Sigmoid colon (tissue), 7 donors: ENCODE measurements at regions of chr22 and their contacts with region 1.

Region 1: DNA sequence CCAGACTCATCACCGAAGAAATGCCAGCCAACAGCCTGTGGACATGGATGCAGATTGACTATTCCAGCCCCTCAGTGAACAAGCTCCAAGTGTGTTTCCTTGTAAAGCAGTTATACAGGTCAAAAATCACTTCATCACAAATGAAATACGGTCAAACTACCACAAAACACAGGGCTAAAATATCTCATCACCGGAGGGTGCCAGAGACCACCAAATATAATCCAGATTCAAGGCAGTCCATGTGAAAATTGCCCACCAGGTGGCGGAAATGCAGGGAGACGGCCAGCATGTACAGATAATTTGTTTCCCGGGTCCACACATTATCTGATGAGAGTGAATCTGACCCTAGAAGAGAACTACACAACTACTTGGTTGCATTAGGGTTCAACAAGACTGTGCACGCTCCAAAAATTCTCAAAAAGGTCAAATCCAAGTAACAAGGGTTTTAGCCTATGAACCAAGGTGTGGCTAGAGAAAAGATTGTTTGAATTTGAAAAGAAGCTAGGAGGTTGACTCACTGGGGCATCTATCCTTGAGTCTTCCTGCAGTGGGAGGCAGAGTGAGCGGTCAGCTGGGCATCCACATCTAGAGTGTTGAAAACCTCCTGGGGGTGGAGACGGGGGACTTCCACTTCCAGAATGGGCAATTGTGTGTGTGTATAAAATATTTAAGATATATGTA is 71.7 kb downstream of the IGLL5 start:
- DNase-seq: peak; percentile 83
- H3K4me3 ChIP-seq: no peak overlapping the region
- H3K27ac ChIP-seq: no peak overlapping the region
- H3K4me1 ChIP-seq: no peaks in the 10 kb centered on the region
- H3K27me3 ChIP-seq: peaks cover 0 to 5% (median 0%) of the 10 kb centered on the region in 3 donors
- CTCF ChIP-seq: peak; percentile 84 to 97 (median 88)
- EP300 ChIP-seq: no peak
- POLR2A ChIP-seq: no peak

Region 2: DNA sequence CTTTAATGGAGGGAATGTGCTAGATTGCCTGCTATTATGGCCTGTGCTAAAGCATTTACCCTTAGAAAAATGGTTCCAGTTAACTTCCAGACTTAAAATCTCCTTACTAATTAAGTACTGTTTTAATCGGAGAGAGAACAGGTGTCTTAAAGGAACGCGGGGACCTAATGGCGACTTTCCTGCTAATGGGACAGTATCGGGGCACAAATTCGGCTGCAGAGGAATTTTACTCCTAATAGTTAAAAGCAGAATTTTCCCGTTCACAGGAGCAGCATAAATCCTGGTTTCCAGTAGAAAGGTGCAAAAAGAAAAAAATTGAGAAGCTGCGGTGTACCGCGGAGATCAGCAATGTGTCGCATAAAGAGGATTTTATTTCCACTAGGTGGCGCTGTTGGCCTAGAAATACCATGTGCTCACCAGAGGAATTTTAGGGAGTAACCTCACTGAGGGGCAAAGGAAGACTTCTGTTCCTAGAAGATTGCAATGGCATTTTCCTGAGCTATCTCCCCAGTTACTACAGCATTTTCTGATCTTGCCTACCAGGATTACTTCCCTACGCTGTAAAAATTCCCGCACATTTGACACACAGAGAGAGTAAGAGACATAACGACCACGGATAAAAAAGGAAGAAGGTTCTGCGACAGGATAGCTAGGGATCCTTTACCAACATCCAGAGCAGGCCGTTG is 495.3 kb before region 1 on chr22:
- intact Hi-C with region 1: loop called (anchors 5 kb)
- DNase-seq: no peak
- H3K4me3 ChIP-seq: no peak overlapping the region
- H3K27ac ChIP-seq: no peak overlapping the region
- H3K4me1 ChIP-seq: no peaks in the 10 kb centered on the region
- H3K27me3 ChIP-seq: peaks cover 0 to 54% (median 19%) of the 10 kb centered on the region in 3 donors
- CTCF ChIP-seq: peak; percentile 29 to 53 (median 46)
- EP300 ChIP-seq: no peak
- POLR2A ChIP-seq: no peak

Region 3: GRCh38 chr22:22848364-22848866 is 110.9 kb before region 1 on chr22:
- intact Hi-C with region 1: loop called (anchors 5 kb)
- DNase-seq: no peak
- H3K4me3 ChIP-seq: no peak overlapping the region
- H3K27ac ChIP-seq: no peak overlapping the region
- H3K4me1 ChIP-seq: no peaks in the 10 kb centered on the region
- H3K27me3 ChIP-seq: peaks cover 0 to 18% (median 0%) of the 10 kb centered on the region in 3 donors
- CTCF ChIP-seq: peak; percentile 10 to 67 (median 57)
- EP300 ChIP-seq: no peak
- POLR2A ChIP-seq: no peak

Region 4: DNA sequence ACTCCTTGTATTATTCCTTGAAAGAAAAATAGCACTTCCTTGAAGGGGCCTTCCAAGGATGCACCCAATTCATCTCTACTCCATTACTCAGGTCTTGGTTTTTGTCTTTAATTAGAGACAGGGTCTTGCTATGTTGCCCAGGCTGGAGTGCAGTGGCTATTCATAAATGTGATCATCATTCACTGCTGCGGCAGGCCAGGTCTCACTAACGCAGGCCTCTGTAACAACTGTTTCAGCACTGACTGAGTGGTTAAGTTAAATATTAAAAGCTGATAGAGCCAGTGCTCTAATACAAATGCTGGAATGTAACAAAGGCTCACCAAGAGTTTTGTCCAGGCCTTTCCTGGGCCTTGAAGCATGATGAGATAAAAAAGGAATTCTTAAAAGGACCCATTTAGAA is 49.6 kb after region 1 on chr22:
- intact Hi-C with region 1: no loop called
- DNase-seq: no peak
- H3K4me3 ChIP-seq: no peak overlapping the region
- H3K27ac ChIP-seq: no peak overlapping the region
- H3K4me1 ChIP-seq: no peaks in the 10 kb centered on the region
- H3K27me3 ChIP-seq: no peaks in the 10 kb centered on the region
- CTCF ChIP-seq: no peak
- EP300 ChIP-seq: no peak
- POLR2A ChIP-seq: no peak

Region 5: DNA sequence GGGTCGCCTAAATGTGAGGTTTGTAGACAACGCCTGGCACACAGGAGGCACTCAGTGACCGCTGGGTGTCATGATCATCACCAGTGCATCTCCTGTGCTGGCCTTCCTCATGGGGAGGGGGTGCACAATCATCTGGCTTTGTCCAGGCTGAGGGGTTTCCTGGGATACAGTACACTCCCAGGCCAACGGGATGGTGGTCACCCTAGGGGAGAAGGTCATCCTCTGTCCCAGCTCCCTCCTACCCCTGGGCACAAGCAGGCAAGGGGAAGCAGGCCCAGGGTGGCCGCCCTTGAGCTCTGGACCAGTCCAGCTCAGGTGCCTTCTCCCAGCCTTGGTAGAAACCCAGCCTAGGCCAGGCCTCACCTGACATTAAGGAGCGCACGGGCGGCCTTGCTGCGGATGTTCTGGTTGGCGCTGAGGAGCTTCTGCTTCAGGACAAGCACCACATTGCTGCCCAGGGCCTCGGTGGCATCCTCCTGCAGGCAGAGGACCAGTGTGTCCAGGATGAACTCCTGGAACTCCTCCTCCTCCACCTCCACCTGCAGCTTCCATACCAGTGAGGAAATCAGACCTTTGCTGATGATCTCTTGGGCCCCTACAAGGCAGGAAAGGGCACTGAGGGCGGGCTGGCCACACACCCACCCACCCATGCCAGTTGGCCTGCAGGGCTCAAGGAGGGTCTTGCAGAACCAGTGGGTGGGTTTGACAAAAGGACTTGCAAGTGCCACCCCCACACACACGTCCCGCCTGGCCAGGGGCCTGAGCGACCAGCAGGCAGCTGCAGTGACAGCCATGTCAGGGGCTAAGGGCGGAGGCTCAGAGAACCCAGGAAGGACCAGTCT is 104.5 kb after region 1 on chr22:
- intact Hi-C with region 1: no loop called
- DNase-seq: peak; percentile 59
- H3K4me3 ChIP-seq: no peak overlapping the region
- H3K27ac ChIP-seq: no peak overlapping the region
- H3K4me1 ChIP-seq: no peaks in the 10 kb centered on the region
- H3K27me3 ChIP-seq: no peaks in the 10 kb centered on the region
- CTCF ChIP-seq: no peak
- EP300 ChIP-seq: no peak
- POLR2A ChIP-seq: no peak

Region 6: GRCh38 chr22:23128269-23129108 is 169.2 kb after region 1 on chr22:
- intact Hi-C with region 1: loop called (anchors 1 kb)
- DNase-seq: peak; percentile 78
- H3K4me3 ChIP-seq: no peak overlapping the region
- H3K27ac ChIP-seq: no peak overlapping the region
- H3K4me1 ChIP-seq: peaks cover 0 to 7% (median 5%) of the 10 kb centered on the region in 4 donors
- H3K27me3 ChIP-seq: no peaks in the 10 kb centered on the region
- CTCF ChIP-seq: peak; percentile 66 to 89 (median 72)
- EP300 ChIP-seq: no peak
- POLR2A ChIP-seq: no peak

Region 7: DNA sequence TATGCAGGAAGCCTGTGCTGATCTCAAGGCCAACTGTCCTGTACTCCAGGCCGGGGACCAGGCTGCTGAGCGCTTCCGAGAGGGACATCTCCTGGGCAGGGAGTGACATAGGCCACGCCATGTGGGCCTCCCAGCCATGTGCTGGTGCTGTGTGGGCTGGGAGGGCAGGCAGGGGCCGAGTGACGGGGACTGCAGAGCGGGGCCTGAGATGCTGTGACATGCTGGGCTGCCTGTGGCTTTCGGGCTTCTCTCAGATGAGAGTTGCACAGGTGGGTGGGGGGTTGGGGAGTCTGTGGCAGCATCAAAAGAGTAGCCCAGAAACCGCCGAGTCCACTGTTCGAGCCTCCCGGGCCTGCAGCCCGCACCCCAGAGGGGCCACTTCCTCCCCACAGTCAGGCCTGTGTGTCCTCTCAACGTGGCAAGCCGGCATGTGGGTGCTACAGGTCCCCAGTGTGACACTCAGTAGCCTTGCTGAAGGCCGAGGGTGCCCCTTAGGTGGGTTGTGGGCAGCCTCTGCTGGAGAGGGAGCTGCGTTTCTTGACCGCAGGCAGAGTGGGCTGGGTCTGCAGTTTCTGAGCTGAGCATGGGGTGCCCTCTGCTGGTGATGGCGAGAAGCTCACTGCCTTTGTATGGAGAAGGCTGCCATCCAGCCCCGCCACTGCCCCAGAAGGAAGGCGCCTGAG is 322.3 kb after region 1 on chr22:
- intact Hi-C with region 1: loop called (anchors 10 kb)
- DNase-seq: peak; percentile 93
- H3K4me3 ChIP-seq: peak overlapping the region in 2 of 4 donors; percentile 23 to 24
- H3K27ac ChIP-seq: peak overlapping the region; percentile 81 to 91 (median 86)
- H3K4me1 ChIP-seq: peaks cover 0 to 69% (median 57%) of the 10 kb centered on the region in 4 donors
- H3K27me3 ChIP-seq: no peaks in the 10 kb centered on the region
- CTCF ChIP-seq: peak; percentile 97 to 98 (median 97)
- EP300 ChIP-seq: no peak
- POLR2A ChIP-seq: no peak

Region 8: DNA sequence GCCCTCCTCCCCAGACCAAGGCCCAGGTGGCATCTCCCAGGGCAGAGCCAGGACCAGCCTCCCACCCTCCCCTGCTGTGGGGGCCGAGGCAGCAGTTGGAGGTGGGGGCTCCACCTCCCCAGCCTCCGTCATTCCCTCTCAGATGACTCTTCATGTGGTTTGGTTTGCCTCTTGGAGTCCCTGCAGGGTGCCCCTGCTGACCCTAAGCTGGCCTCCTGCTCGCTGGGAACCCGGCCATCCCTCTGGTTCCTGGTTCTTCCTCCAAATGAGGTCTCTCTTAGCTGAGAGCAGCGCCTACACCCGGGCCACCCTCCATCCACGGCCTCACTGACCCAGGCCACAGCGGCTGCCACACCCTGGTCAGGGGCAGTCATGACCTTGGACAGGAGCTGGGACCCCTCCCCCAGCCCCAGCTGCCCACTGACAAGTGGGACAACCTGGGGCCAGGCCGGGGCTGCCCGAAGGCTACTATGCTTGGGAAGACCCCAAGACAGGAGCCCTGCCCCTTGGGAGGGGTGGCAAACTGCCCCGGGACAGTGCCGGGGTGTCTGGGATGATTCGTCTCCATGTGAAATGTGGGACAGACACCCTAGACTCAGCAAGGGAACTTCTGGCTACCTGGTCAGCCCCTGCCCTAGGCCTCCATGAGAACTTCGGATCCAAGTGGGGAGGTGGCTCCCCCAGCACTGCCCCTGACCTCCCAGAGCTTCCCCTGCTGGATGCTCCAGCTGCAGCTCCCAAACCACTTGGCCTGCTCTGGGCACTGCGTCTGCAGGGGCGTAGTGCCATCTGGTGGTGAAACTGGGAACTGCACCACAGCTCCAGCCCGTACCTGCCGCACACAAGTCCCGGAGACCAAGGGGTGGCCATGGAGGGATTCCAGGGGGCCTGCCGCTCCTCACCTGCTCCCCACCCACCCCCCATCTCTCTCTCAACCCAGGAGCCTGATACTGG is 426.3 kb after region 1 on chr22:
- intact Hi-C with region 1: loop called (anchors 10 kb)
- DNase-seq: peak; percentile 87
- H3K4me3 ChIP-seq: no peak overlapping the region
- H3K27ac ChIP-seq: no peak overlapping the region
- H3K4me1 ChIP-seq: peaks cover 0 to 8% (median 0%) of the 10 kb centered on the region in 4 donors
- H3K27me3 ChIP-seq: peaks cover 0 to 5% (median 0%) of the 10 kb centered on the region in 3 donors
- CTCF ChIP-seq: peak; percentile 88 to 99 (median 98)
- EP300 ChIP-seq: no peak
- POLR2A ChIP-seq: no peak